K562 (cell line): ENCODE measurements at regions of chr4 and their contacts with region 1.

Region 1: DNA sequence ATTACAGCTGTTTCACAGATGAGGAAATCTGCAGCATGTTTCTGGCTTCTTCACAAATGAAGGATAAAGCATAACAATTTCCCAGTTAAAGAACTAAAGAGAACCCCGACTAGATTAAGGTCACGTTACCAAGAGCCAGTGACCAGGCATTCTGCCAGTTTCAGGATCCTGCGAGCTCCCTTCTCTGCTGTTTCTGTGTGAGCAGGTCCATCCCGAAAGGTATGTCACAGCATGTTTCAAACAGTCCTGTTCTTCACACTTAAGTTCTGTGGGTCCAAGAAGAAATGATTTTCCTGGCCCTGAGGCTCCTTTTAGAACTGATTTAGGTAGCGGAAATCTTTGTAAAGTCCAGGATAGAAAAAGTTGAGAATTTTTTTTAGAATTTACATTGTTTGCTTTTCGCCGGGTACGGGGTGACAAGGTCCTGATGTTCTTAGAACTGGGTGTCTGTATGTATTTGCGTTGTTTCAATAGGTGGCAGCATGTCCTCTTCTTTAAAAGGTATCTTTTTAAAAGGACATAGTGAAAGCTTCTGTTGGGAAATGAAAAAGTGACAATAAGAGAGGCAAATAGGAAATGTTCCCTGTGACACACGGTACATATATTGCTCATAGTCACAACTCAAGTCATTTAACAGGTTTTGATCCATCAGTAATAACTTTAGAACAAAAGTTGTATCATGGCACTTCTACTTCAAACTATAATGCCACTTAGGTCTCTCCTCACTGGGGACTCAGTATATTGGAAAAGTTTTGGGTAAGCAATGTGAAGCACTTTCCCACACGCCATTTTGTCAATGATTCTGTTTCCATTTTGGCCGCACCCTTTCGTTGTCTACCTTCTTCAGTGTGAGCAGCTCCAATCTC is 18.4 kb downstream of the IL21 start:
- DNase-seq: peak; percentile 16 to 77 (median 40)
- ATAC-seq: peak; percentile 93
- H3K4me3 ChIP-seq: no peak overlapping the region; the same call in 1 of the 2 replicates
- H3K27ac ChIP-seq: peak overlapping the region; percentile 61
- H3K4me1 ChIP-seq: peaks cover 0 to 21% of the 10 kb centered on the region in 2 experiments; a peak in 4 of 5 replicates
- H3K27me3 ChIP-seq: no peaks in the 10 kb centered on the region
- CTCF ChIP-seq: peak; percentile 51 to 76 (median 57); a peak in 4 of 6 replicates
- EP300 ChIP-seq: peak; percentile 3; the same call in 1 of the 2 replicates
- POLR2A ChIP-seq: no peak
- RAD21 ChIP-seq: peak; percentile 81 to 88

Region 2: GRCh38 chr4:122661176-122662160 is 59.0 kb after region 1 on chr4:
- CTCF ChIA-PET with region 1: no interaction called
- POLR2A ChIA-PET with region 1: no interaction called
- in situ Hi-C with region 1: no loop called
- intact Hi-C with region 1: loop called (anchors 5 kb)
- DNase-seq: peak in 2 of 4 experiments; percentile 27 to 56
- ATAC-seq: peak; percentile 84
- H3K4me3 ChIP-seq: no peak overlapping the region
- H3K27ac ChIP-seq: peak overlapping the region; percentile 50; the same call in 2 of the 3 replicates
- H3K4me1 ChIP-seq: peaks cover 0 to 18% of the 10 kb centered on the region in 2 experiments; a peak in 3 of 5 replicates
- H3K27me3 ChIP-seq: no peaks in the 10 kb centered on the region
- CTCF ChIP-seq: no peak
- EP300 ChIP-seq: peak; percentile 84; the same call in 1 of the 2 replicates
- POLR2A ChIP-seq: no peak
- RAD21 ChIP-seq: peak in 1 of 2 experiments; percentile 12; a peak in 1 of 4 replicates

Region 3: GRCh38 chr4:122688529-122689140 is 86.1 kb after region 1 on chr4:
- CTCF ChIA-PET with region 1: no interaction called
- POLR2A ChIA-PET with region 1: no interaction called
- in situ Hi-C with region 1: no loop called
- intact Hi-C with region 1: no loop called
- DNase-seq: no peak
- ATAC-seq: peak; percentile 8; the same call in 1 of the 3 replicates
- H3K4me3 ChIP-seq: no peak overlapping the region
- H3K27ac ChIP-seq: peak overlapping the region; percentile 9; the same call in 1 of the 3 replicates
- H3K4me1 ChIP-seq: peaks cover 4 to 38% of the 10 kb centered on the region in 2 experiments; a peak in 4 of 5 replicates
- H3K27me3 ChIP-seq: no peaks in the 10 kb centered on the region
- CTCF ChIP-seq: no peak
- EP300 ChIP-seq: no peak
- POLR2A ChIP-seq: no peak
- RAD21 ChIP-seq: no peak

Region 4: GRCh38 chr4:122716825-122717448 is 114.4 kb after region 1 on chr4:
- CTCF ChIA-PET with region 1: interaction called, 19 read pairs
- POLR2A ChIA-PET with region 1: interaction called, 4 read pairs
- in situ Hi-C with region 1: loop called (anchors 5 kb)
- intact Hi-C with region 1: loop called (anchors 1 kb)
- DNase-seq: peak; percentile 75 to 87 (median 80)
- ATAC-seq: peak; percentile 96
- H3K4me3 ChIP-seq: no peak overlapping the region
- H3K27ac ChIP-seq: no peak overlapping the region
- H3K4me1 ChIP-seq: peaks cover 1 to 16% of the 10 kb centered on the region in 2 experiments
- H3K27me3 ChIP-seq: no peaks in the 10 kb centered on the region
- CTCF ChIP-seq: peak; percentile 77 to 90 (median 89)
- EP300 ChIP-seq: no peak
- POLR2A ChIP-seq: no peak
- RAD21 ChIP-seq: peak; percentile 82 to 87

Region 5: DNA sequence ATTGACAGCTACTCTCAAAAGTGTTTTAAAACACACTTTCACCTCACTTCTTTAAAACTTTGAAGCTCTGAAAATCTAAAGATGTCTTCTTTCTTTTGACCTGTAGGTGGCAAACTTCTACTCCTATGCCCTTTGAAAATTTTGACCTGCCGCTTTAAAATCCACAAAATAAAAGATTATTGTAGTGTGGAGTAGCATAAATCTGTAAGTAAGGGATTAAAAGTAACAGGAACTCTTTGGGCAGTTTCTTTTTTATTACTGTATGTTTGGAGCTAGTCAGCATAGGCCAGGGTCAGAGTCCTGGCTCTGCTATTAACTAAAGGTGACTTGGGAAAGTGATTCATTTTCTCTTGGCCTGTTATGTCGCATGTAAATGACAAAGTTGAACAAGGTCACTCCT is 155.5 kb after region 1 on chr4:
- CTCF ChIA-PET with region 1: no interaction called
- POLR2A ChIA-PET with region 1: no interaction called
- in situ Hi-C with region 1: no loop called
- intact Hi-C with region 1: loop called (anchors 2 kb)
- DNase-seq: peak in 3 of 4 experiments; percentile 28 to 72 (median 37)
- ATAC-seq: peak; percentile 46
- H3K4me3 ChIP-seq: no peak overlapping the region
- H3K27ac ChIP-seq: peak overlapping the region; percentile 59; the same call in 2 of the 3 replicates
- H3K4me1 ChIP-seq: peaks cover 0 to 11% of the 10 kb centered on the region in 2 experiments; a peak in 3 of 5 replicates
- H3K27me3 ChIP-seq: no peaks in the 10 kb centered on the region
- CTCF ChIP-seq: peak; percentile 47 to 75 (median 53); a peak in 4 of 6 replicates
- EP300 ChIP-seq: no peak
- POLR2A ChIP-seq: no peak
- RAD21 ChIP-seq: peak; percentile 78 to 81

Region 6: DNA sequence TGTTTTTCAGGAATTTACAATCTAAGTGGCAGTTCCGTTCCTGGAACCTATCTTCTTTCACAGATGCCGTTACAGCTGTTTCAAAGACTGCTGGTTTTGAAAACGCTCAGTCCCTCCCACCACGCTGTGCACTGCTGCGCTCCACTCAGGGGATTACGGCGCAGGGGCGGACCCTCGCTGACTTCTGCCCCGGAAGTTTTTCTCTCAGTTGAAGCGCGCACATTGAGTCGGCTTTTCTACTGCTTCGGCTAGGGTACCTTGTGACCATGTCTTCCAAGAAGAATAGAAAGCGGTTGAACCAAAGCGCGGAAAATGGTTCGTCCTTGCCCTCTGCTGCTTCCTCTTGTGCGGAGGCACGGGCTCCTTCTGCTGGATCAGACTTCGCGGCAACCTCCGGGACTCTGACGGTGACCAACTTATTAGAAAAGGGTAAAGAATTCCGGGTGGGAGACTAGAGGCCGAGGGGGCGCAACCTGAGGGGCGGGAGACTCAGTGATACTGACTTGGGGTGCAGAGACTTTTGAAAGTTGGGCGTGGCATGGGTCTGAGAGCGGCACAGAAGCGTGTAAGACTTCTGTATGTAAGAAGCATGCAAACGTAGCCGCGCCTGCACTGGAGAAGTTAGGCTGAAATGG is 320.5 kb after region 1 on chr4:
- CTCF ChIA-PET with region 1: no interaction called
- POLR2A ChIA-PET with region 1: interaction called, 3 read pairs
- in situ Hi-C with region 1: loop called (anchors 5 kb)
- intact Hi-C with region 1: loop called (anchors 2 kb)
- DNase-seq: peak; percentile 79 to 95 (median 84)
- ATAC-seq: peak; percentile 91
- H3K4me3 ChIP-seq: peak overlapping the region; percentile 85
- H3K27ac ChIP-seq: peak overlapping the region; percentile 85
- H3K4me1 ChIP-seq: peaks cover 6 to 26% of the 10 kb centered on the region in 2 experiments; a peak in 4 of 5 replicates
- H3K27me3 ChIP-seq: no peaks in the 10 kb centered on the region
- CTCF ChIP-seq: no peak
- EP300 ChIP-seq: peak; percentile 52; the same call in 1 of the 2 replicates
- POLR2A ChIP-seq: peak; percentile 79
- RAD21 ChIP-seq: no peak

Region 7: DNA sequence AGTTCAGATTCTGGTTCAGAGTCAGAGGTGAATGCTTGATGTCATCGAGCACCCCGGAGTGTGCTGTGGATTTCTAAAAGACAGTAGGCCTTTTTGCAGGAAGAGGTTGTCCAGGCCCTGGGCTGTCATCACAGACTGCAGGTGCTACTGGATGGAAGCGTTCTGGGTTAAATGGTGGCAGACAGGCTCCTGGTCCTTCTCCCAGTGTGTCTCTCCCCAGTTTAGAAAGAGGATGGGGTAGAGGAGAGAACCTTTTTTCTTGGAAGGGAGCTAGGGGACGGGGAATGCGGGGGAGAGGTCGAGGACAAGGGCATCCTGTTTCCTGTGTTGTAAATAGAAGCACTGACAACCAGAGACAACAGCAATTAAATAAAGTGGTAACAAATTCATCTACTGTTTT is 422.2 kb after region 1 on chr4:
- CTCF ChIA-PET with region 1: no interaction called
- POLR2A ChIA-PET with region 1: no interaction called
- in situ Hi-C with region 1: no loop called
- intact Hi-C with region 1: no loop called
- DNase-seq: no peak
- ATAC-seq: peak; percentile 66
- H3K4me3 ChIP-seq: no peak overlapping the region
- H3K27ac ChIP-seq: no peak overlapping the region
- H3K4me1 ChIP-seq: no peaks in the 10 kb centered on the region; a peak in 1 of 5 replicates
- H3K27me3 ChIP-seq: no peaks in the 10 kb centered on the region
- CTCF ChIP-seq: no peak
- EP300 ChIP-seq: no peak
- POLR2A ChIP-seq: no peak
- RAD21 ChIP-seq: no peak

Region 8: DNA sequence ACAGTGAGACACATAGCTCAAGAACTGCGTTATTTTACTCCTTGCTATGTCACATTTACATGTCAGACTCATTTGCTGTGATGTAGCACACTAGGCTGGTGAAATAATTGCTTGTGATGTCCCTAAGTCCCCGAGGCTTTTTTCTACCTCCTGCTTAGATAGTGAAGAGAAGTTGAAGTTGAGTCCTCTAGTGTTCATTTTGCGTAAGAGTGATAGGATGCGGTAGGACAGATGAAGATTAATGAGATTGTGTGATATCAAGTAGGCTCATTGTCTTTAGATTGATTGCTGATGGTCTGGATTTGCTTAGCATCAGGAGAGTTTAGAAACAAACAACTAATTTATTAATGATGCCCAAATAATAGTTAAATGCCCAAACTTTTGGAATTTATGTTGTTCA is 493.5 kb after region 1 on chr4:
- CTCF ChIA-PET with region 1: no interaction called
- POLR2A ChIA-PET with region 1: no interaction called
- in situ Hi-C with region 1: no loop called
- intact Hi-C with region 1: loop called (anchors 5 kb)
- DNase-seq: peak; percentile 14 to 44 (median 23)
- ATAC-seq: peak; percentile 88
- H3K4me3 ChIP-seq: no peak overlapping the region
- H3K27ac ChIP-seq: no peak overlapping the region
- H3K4me1 ChIP-seq: no peaks in the 10 kb centered on the region
- H3K27me3 ChIP-seq: no peaks in the 10 kb centered on the region
- CTCF ChIP-seq: peak; percentile 49 to 65 (median 63); a peak in 5 of 6 replicates
- EP300 ChIP-seq: no peak
- POLR2A ChIP-seq: no peak
- RAD21 ChIP-seq: peak in 1 of 2 experiments; percentile 55; a peak in 2 of 4 replicates

Region 9: GRCh38 chr4:123661080-123661737 is 1058.7 kb after region 1 on chr4:
- CTCF ChIA-PET with region 1: no interaction called
- POLR2A ChIA-PET with region 1: no interaction called
- in situ Hi-C with region 1: no loop called
- intact Hi-C with region 1: loop called (anchors 10 kb)
- DNase-seq: peak in 2 of 4 experiments; percentile 14 to 20
- ATAC-seq: no peak
- H3K4me3 ChIP-seq: no peak overlapping the region
- H3K27ac ChIP-seq: no peak overlapping the region
- H3K4me1 ChIP-seq: no peaks in the 10 kb centered on the region; a peak in 1 of 5 replicates
- H3K27me3 ChIP-seq: no peaks in the 10 kb centered on the region
- CTCF ChIP-seq: peak in 2 of 3 experiments; percentile 39 to 59; a peak in 3 of 6 replicates
- EP300 ChIP-seq: no peak
- POLR2A ChIP-seq: no peak
- RAD21 ChIP-seq: peak; percentile 30 to 62; a peak in 3 of 4 replicates